ENCODE measurements at regions of chr17 and their contacts with region 1.

Region 1: GRCh38 chr17:28726226-28727130 is at the start of gene TLCD1:
- DNase-seq: peak; percentile 90
- ATAC-seq: peak; percentile 63
- H3K4me3 ChIP-seq: peak within 1 kb of the TSS; percentile 72
- H3K27ac ChIP-seq: peak within 1 kb of the TSS; percentile 74
- H3K4me1 ChIP-seq: peaks cover 12% of the 10 kb centered on the region
- H3K27me3 ChIP-seq: no peaks in the 10 kb centered on the region
- CTCF ChIP-seq: peak; percentile 99
- POLR2A ChIP-seq: peak; percentile 62
- RAD21 ChIP-seq: peak; percentile 100
- total RNA-seq, gene TLCD1: 3.6 and 3.9 TPM in 2 replicates

Region 2: GRCh38 chr17:28743225-28744103 is 17.0 kb after region 1 on chr17 and contains the start of gene TRAF4:
- CTCF ChIA-PET with region 1: interaction called, 60 read pairs
- POLR2A ChIA-PET with region 1: interaction called, 6 read pairs
- dilution Hi-C with region 1: no loop called
- in situ Hi-C with region 1: no loop called
- intact Hi-C with region 1: loop called (anchors 1 kb)
- DNase-seq: peak; percentile 84
- ATAC-seq: peak; percentile 79
- H3K4me3 ChIP-seq: peak within 1 kb of the TSS; percentile 100
- H3K27ac ChIP-seq: peak within 1 kb of the TSS; percentile 99
- H3K4me1 ChIP-seq: peaks cover 16% of the 10 kb centered on the region
- H3K27me3 ChIP-seq: no peaks in the 10 kb centered on the region
- CTCF ChIP-seq: peak; percentile 39
- POLR2A ChIP-seq: peak; percentile 98
- RAD21 ChIP-seq: peak; percentile 20; the same call in 1 of the 2 replicates
- total RNA-seq, gene TRAF4: 27.5 and 36.9 TPM in 2 replicates

Region 3: DNA sequence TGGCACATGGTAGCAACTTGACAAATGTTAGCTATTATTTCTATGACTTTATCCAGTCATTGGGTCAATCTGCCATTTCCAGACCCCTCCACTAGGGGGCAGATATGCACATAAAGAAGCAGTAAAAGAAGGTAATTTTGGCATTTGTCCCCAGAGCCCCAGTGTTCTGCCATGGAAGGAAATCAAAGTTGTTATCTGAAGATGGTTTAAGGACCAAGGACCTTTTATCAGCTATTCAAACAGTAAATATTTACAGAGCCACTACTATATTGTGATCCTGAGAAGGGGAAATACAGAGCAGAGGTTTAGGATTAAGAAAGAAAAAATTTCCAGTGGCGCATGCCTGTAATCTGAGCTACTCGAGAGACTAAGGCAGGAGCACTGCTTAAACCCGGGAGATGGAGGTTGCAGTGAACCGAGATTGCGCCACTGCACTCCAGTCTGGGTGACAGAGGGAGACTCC is 37.4 kb after region 1 on chr17:
- CTCF ChIA-PET with region 1: interaction called, 22 read pairs
- POLR2A ChIA-PET with region 1: interaction called, 3 read pairs
- dilution Hi-C with region 1: no loop called
- in situ Hi-C with region 1: no loop called
- intact Hi-C with region 1: no loop called
- DNase-seq: peak; percentile 74
- ATAC-seq: peak; percentile 76
- H3K4me3 ChIP-seq: no peak overlapping the region
- H3K27ac ChIP-seq: no peak overlapping the region
- H3K4me1 ChIP-seq: peaks cover 4% of the 10 kb centered on the region; the same call in 1 of the 2 replicates
- H3K27me3 ChIP-seq: no peaks in the 10 kb centered on the region
- CTCF ChIP-seq: peak; percentile 85
- POLR2A ChIP-seq: no peak
- RAD21 ChIP-seq: peak; percentile 82

Region 4: GRCh38 chr17:28896884-28897768 is 170.6 kb after region 1 on chr17 and contains the start of gene FLOT2:
- CTCF ChIA-PET with region 1: interaction called, 11 read pairs
- POLR2A ChIA-PET with region 1: no interaction called
- dilution Hi-C with region 1: no loop called
- in situ Hi-C with region 1: no loop called
- intact Hi-C with region 1: no loop called
- DNase-seq: peak; percentile 30
- ATAC-seq: peak; percentile 84
- H3K4me3 ChIP-seq: peak within 1 kb of the TSS; percentile 79
- H3K27ac ChIP-seq: peak within 1 kb of the TSS; percentile 76
- H3K4me1 ChIP-seq: peaks cover 9% of the 10 kb centered on the region
- H3K27me3 ChIP-seq: no peaks in the 10 kb centered on the region
- CTCF ChIP-seq: peak; percentile 27; the same call in 1 of the 2 replicates
- POLR2A ChIP-seq: no peak
- RAD21 ChIP-seq: no peak
- total RNA-seq, gene FLOT2: 19.7 and 31.1 TPM in 2 replicates

Region 5: GRCh38 chr17:28916302-28916934 is 189.9 kb after region 1 on chr17:
- CTCF ChIA-PET with region 1: interaction called, 6 read pairs
- POLR2A ChIA-PET with region 1: no interaction called
- dilution Hi-C with region 1: no loop called
- in situ Hi-C with region 1: no loop called
- intact Hi-C with region 1: loop called (anchors 1 kb)
- DNase-seq: peak; percentile 43
- ATAC-seq: peak; percentile 78
- H3K4me3 ChIP-seq: no peak overlapping the region
- H3K27ac ChIP-seq: no peak overlapping the region
- H3K4me1 ChIP-seq: no peaks in the 10 kb centered on the region
- H3K27me3 ChIP-seq: no peaks in the 10 kb centered on the region
- CTCF ChIP-seq: peak; percentile 50
- POLR2A ChIP-seq: no peak
- RAD21 ChIP-seq: peak; percentile 46

Region 6: GRCh38 chr17:29111816-29112499 is 385.5 kb after region 1 on chr17:
- CTCF ChIA-PET with region 1: interaction called, 15 read pairs
- POLR2A ChIA-PET with region 1: no interaction called
- dilution Hi-C with region 1: no loop called
- in situ Hi-C with region 1: loop called (anchors 10 kb)
- intact Hi-C with region 1: loop called (anchors 2 kb)
- DNase-seq: peak; percentile 55
- ATAC-seq: peak; percentile 88
- H3K4me3 ChIP-seq: no peak overlapping the region
- H3K27ac ChIP-seq: no peak overlapping the region
- H3K4me1 ChIP-seq: peaks cover 5% of the 10 kb centered on the region
- H3K27me3 ChIP-seq: no peaks in the 10 kb centered on the region
- CTCF ChIP-seq: peak; percentile 85
- POLR2A ChIP-seq: no peak
- RAD21 ChIP-seq: peak; percentile 77